Caco-2 (cell line): ENCODE measurements at regions of chr2 and their contacts with region 1.

Region 1: GRCh38 chr2:205270689-205271088 is 411.6 kb upstream of the NRP2 start:
- DNase-seq: no peak
- H3K4me3 ChIP-seq: no peak overlapping the region
- H3K4me3 Mint-ChIP-seq: no peak overlapping the region
- H3K27ac Mint-ChIP-seq: no peak overlapping the region
- H3K4me1 ChIP-seq: peaks cover 18% of the 10 kb centered on the region
- H3K4me1 Mint-ChIP-seq: peaks cover 16% of the 10 kb centered on the region
- H3K27me3 ChIP-seq: no peaks in the 10 kb centered on the region
- H3K27me3 Mint-ChIP-seq: no peaks in the 10 kb centered on the region
- CTCF ChIP-seq: no peak

Region 2: GRCh38 chr2:204134421-204134820 is 1136.3 kb before region 1 on chr2:
- CTCF ChIA-PET with region 1: no interaction called
- POLR2A ChIA-PET with region 1: interaction called, 11 read pairs
- intact Hi-C with region 1: no loop called
- DNase-seq: no peak
- H3K4me3 ChIP-seq: no peak overlapping the region
- H3K4me3 Mint-ChIP-seq: no peak overlapping the region
- H3K27ac Mint-ChIP-seq: no peak overlapping the region
- H3K4me1 ChIP-seq: no peaks in the 10 kb centered on the region
- H3K4me1 Mint-ChIP-seq: no peaks in the 10 kb centered on the region
- H3K27me3 ChIP-seq: no peaks in the 10 kb centered on the region
- H3K27me3 Mint-ChIP-seq: peaks cover 24% of the 10 kb centered on the region
- CTCF ChIP-seq: no peak

Region 3: GRCh38 chr2:204885747-204886146 is 384.9 kb before region 1 on chr2:
- CTCF ChIA-PET with region 1: no interaction called
- POLR2A ChIA-PET with region 1: no interaction called
- intact Hi-C with region 1: no loop called
- DNase-seq: no peak
- H3K4me3 ChIP-seq: no peak overlapping the region
- H3K4me3 Mint-ChIP-seq: no peak overlapping the region
- H3K27ac Mint-ChIP-seq: no peak overlapping the region
- H3K4me1 ChIP-seq: peaks cover 18% of the 10 kb centered on the region
- H3K4me1 Mint-ChIP-seq: peaks cover 32% of the 10 kb centered on the region
- H3K27me3 ChIP-seq: no peaks in the 10 kb centered on the region
- H3K27me3 Mint-ChIP-seq: no peaks in the 10 kb centered on the region
- CTCF ChIP-seq: peak; percentile 14 to 28

Region 4: DNA sequence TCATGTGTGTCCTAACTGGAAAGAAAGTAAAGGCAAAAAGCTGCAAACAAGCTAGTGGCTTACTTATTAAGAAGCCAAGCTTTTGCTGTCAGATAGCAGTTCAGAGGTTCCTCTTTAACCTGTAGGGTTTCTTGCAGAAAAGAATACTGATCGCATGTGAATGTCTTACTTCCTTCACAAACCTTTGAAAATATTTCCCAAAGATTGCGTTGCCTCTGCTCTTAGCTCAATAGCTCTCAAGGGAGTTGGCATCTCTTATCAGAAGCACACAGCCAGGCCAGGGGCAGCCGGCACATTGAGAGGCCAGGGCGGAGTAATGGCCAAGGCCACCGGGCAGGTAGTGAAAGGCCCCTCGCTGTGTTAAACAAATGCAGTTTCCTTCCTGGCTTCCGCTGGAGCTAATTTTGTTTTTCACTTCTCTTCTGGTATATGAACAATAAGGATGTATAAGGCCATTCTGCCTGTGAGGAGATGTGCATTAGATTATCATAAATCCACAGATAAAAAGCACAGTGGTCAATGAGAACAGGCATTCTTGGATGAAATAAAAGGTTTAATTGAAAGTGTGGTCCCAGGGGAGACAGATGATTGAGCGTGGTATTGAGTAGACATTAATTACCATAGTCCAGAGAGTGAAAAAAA is 130.7 kb before region 1 on chr2:
- CTCF ChIA-PET with region 1: no interaction called
- POLR2A ChIA-PET with region 1: no interaction called
- intact Hi-C with region 1: no loop called
- DNase-seq: no peak
- H3K4me3 ChIP-seq: no peak overlapping the region
- H3K4me3 Mint-ChIP-seq: no peak overlapping the region
- H3K27ac Mint-ChIP-seq: no peak overlapping the region
- H3K4me1 ChIP-seq: no peaks in the 10 kb centered on the region
- H3K4me1 Mint-ChIP-seq: no peaks in the 10 kb centered on the region
- H3K27me3 ChIP-seq: no peaks in the 10 kb centered on the region
- H3K27me3 Mint-ChIP-seq: no peaks in the 10 kb centered on the region
- CTCF ChIP-seq: no peak

Region 5: DNA sequence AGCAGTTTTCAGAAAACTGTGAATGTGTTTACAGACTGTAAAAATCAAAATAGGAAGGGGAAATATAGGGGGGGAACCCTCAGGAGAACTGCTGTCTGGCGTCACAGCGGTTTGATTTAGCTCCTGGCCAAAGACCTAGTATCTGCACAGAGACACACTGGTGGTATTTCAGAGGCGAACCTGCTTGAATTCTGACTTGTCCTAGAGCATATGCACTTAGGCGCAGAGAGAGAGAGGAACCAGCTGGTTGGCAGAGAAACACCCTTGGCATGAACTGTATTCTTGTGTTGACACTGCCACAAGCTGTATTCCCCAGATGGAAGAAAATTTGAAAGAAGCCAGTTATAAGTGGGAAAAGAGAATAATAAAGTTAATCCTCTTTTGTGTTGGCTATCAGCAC is 94.9 kb before region 1 on chr2:
- CTCF ChIA-PET with region 1: no interaction called
- POLR2A ChIA-PET with region 1: no interaction called
- intact Hi-C with region 1: no loop called
- DNase-seq: no peak
- H3K4me3 ChIP-seq: no peak overlapping the region
- H3K4me3 Mint-ChIP-seq: no peak overlapping the region
- H3K27ac Mint-ChIP-seq: no peak overlapping the region
- H3K4me1 ChIP-seq: no peaks in the 10 kb centered on the region
- H3K4me1 Mint-ChIP-seq: no peaks in the 10 kb centered on the region
- H3K27me3 ChIP-seq: no peaks in the 10 kb centered on the region
- H3K27me3 Mint-ChIP-seq: no peaks in the 10 kb centered on the region
- CTCF ChIP-seq: no peak

Region 6: GRCh38 chr2:205405194-205405593 is 134.5 kb after region 1 on chr2:
- CTCF ChIA-PET with region 1: no interaction called
- POLR2A ChIA-PET with region 1: no interaction called
- intact Hi-C with region 1: no loop called
- DNase-seq: no peak
- H3K4me3 ChIP-seq: no peak overlapping the region
- H3K4me3 Mint-ChIP-seq: no peak overlapping the region
- H3K27ac Mint-ChIP-seq: no peak overlapping the region
- H3K4me1 ChIP-seq: peaks cover 21% of the 10 kb centered on the region
- H3K4me1 Mint-ChIP-seq: peaks cover 18% of the 10 kb centered on the region
- H3K27me3 ChIP-seq: no peaks in the 10 kb centered on the region
- H3K27me3 Mint-ChIP-seq: no peaks in the 10 kb centered on the region
- CTCF ChIP-seq: no peak